Heart right ventricle (tissue), 16 donors: ENCODE measurements at regions of chr15 and their contacts with region 1.

Region 1: GRCh38 chr15:49438962-49439631 is 16.1 kb downstream of the FGF7 start:
- DNase-seq: peak; percentile 16 to 31
- ATAC-seq: peak; percentile 71 to 97 (median 89)
- H3K4me3 ChIP-seq: peak overlapping the region in 1 of 10 donors; percentile 3
- H3K27ac ChIP-seq: peak overlapping the region in 9 of 10 donors; percentile 5 to 69 (median 64)
- H3K4me1 ChIP-seq: peaks cover 0 to 59% (median 42%) of the 10 kb centered on the region in 9 donors
- H3K27me3 ChIP-seq: no peaks in the 10 kb centered on the region
- CTCF ChIP-seq: no peak

Region 2: DNA sequence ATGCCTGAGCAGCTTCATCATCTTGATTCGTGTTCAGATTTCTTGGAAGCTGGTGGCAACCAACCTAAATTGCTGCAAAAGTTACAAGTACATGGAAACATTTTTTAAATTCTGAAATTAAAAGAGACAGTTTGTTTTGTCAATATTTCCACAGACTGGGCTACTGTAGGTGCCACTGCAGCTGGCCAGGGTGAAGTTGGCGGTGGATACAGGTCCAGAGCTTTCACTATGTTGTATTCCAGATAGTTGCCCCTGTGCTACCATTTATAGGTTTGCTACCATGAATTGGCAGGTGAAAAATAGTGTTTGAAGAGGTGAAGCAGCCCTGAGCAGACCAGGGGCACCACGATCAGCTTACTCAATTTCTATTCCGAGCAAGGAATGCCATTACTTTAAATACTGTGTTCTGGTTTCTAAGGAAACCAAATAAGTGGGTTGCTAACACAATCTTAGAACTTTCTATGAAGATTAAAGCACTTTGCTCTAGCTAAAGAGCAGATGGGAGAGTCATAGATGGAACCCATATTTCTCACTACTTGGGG is 454.2 kb before region 1 on chr15:
- intact Hi-C with region 1: loop called in 1 of 10 experiments (anchors 10 kb)
- DNase-seq: no peak
- ATAC-seq: peak in 5 of 8 donors; percentile 25 to 65 (median 44)
- H3K4me3 ChIP-seq: no peak overlapping the region
- H3K27ac ChIP-seq: peak overlapping the region in 1 of 10 donors; percentile 4
- H3K4me1 ChIP-seq: peaks cover 0 to 21% (median 5%) of the 10 kb centered on the region in 9 donors
- H3K27me3 ChIP-seq: no peaks in the 10 kb centered on the region
- CTCF ChIP-seq: no peak

Region 3: DNA sequence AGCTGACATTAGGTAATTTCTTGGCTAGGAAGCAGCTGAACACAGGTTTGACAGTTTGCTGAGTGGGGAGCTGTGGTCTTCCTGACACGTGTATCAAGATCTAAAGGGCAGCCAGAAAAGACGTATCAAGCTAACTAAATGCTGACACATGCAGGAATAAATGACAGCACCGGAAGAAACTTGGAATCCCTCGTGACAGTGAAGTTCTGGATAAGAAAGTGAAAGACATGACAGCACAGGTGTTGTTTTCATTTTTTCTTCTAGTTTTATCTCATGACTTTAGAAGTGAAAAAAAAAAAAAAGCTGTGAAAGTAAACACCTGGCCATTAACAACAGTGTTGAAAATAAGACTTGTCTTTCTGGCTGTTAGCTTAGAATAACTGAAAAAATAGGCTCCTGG is 32.6 kb after region 1 on chr15:
- intact Hi-C with region 1: no loop called
- DNase-seq: no peak
- ATAC-seq: no peak
- H3K4me3 ChIP-seq: no peak overlapping the region
- H3K27ac ChIP-seq: no peak overlapping the region
- H3K4me1 ChIP-seq: peaks cover 0 to 25% (median 11%) of the 10 kb centered on the region in 9 donors
- H3K27me3 ChIP-seq: no peaks in the 10 kb centered on the region
- CTCF ChIP-seq: no peak